ENCODE measurements at regions of chr12 and their contacts with region 1.

Region 1: DNA sequence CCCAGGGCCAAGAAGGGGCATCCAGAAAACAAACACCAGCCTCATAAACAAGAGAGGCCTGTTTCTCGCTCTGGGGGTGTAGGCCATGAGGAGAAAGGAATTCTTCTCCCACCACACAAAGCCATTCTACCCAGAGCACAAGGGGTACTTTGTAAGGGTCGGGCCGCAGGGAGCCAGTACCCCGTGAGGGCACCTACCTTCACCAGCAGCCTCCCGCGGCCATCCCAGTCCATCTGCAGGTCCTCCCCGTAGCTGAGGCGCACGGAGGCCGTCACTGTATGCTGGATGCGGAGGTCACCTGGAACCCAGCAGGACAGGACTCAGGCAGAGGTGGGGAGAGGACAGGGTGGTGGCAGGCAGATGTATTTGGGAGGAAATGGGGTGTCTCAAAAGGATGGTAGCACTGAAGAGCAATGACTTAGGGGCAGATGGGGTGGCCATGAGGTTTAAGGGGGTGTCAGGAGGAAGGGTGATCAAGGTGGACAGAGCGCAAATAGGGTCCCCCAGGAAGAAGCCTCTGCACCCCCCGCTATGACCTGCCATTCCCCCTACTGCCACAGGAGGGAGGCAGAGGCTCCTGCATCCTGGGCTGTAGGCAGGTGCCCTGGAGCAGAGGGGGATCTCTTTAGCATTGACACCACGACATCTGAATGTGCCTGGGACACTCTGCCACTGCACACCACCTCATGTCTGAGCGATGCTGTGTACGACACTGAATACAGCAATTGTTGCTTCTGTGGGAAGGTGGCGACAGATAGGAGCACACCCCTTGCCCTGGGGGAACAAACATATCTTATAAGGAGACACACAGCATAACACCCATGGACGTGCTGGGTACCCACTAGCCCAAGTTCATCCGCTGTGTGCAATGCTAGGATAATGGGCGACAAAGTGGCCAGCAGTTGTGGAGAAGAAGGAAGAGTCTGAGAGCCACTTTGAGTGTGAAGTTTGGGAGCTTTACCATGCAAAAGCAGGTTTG is 61.4 kb downstream of the VWF start:
- DNase-seq: peak; percentile 84
- H3K4me3 ChIP-seq: no peak overlapping the region
- H3K27ac ChIP-seq: peak overlapping the region in 1 of 8 donors; percentile 17
- H3K4me1 ChIP-seq: peaks cover 0 to 15% (median 3%) of the 10 kb centered on the region in 6 donors
- H3K27me3 ChIP-seq: peaks cover 0 to 15% (median 0%) of the 10 kb centered on the region in 7 donors
- CTCF ChIP-seq: peak; percentile 74 to 94 (median 87)
- POLR2A ChIP-seq: no peak

Region 2: DNA sequence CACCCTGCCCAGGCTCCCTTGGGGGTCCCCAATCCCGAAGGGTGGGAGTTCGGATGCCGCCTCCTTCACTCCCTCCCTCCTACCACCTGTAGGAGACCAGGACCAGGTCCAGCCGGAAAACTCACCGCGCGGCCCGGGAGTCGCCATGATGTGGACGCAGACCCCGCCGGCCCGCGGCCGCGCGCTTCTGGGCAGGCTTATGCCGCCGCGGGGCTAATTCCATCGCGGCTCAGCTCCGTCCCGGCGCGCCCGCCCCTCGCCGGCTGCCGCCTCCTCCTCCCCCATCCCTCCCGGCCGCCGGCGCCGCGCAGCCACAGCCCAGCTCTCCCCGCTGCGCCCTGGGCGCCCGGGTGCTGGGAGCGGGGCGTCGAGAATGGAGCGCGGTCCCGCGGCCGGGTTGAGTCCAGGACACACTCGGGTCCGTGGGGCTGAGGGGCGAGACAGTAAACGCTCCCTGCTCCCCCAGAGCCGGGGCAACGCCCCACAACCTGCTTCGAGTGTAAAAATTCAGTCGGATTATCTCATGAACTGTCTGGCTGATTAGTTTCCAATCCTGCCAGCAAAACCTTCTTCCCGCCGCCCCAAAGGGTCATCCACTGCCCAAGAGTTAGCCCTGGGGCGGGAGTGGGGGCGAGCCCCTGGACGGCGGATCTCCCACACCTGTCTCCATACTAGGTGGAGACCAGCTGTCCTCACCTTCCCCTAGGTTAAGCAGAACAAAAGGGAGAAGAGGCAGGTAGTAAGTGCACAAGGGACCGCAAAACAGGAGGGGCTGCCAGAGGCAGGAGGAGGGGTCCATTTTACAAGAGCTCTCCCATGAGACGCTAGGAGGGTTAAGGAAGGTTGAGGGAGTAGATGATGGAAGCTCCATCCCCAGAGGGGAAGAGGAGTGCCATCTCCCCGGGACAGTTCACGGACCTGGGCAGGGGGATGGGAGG is 117.7 kb before region 1 on chr12 and contains the start of gene ANO2:
- intact Hi-C with region 1: no loop called
- DNase-seq: no peak
- H3K4me3 ChIP-seq: peak within 1 kb of the TSS in 4 of 8 donors; percentile 8 to 49 (median 14)
- H3K27ac ChIP-seq: no peak within 1 kb of the TSS
- H3K4me1 ChIP-seq: peaks cover 0 to 13% (median 4%) of the 10 kb centered on the region in 6 donors
- H3K27me3 ChIP-seq: peaks cover 0 to 71% (median 28%) of the 10 kb centered on the region in 7 donors
- CTCF ChIP-seq: no peak
- POLR2A ChIP-seq: no peak
- total RNA-seq, gene ANO2: 10.5 to 35.1 (median 15.7) TPM

Region 3: GRCh38 chr12:6195665-6196535 is 132.9 kb after region 1 on chr12:
- intact Hi-C with region 1: loop called (anchors 10 kb)
- DNase-seq: peak; percentile 88
- H3K4me3 ChIP-seq: no peak overlapping the region
- H3K27ac ChIP-seq: peak overlapping the region in 6 of 8 donors; percentile 13 to 58 (median 37)
- H3K4me1 ChIP-seq: peaks cover 4 to 35% (median 27%) of the 10 kb centered on the region in 6 donors
- H3K27me3 ChIP-seq: peaks cover 0 to 40% (median 7%) of the 10 kb centered on the region in 7 donors
- CTCF ChIP-seq: peak; percentile 84 to 94 (median 92)
- POLR2A ChIP-seq: no peak

Region 4: DNA sequence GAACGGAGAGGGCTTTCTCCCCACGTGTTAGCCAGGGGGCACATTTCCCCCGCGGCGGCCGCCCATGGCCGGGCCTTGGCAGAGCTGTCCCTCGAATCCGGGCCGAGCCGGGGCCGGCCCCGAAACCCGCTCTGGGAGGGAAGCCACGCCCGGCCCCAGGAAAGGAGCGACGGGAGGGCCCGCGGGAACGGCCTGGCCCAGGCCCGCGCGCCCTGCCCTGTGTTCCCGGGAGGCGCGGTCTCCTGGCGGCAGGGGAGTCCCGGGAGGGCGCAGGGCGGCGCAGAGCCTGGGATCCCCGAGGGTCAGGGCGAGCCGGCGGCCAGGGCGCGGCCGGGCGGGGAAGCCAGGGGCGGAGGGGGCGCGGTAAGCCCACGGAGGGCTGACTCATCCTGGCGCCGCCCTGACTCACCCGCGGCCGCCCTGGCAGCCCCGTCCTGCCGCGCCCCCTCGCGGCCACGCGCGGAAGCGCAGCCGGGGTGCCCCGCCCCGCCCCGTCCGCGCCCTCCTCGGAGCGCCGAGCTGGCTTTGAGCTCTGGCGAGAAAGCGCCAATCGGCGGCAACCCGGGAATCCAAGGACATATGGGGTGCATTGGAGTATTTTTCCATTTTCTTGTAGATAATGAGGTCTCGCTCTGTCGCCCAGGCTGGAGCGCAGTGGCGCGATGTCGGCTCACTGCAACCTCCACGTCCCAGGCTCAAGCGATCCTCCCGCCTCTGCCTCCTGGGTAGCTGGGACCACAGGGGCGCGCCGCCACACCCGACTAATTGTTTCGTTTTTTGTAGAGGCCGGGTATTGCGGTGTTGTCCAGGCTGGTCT is 215.6 kb after region 1 on chr12:
- intact Hi-C with region 1: loop called (anchors 5 kb)
- DNase-seq: peak; percentile 96
- H3K4me3 ChIP-seq: peak overlapping the region; percentile 31 to 74 (median 50)
- H3K27ac ChIP-seq: peak overlapping the region in 7 of 8 donors; percentile 54 to 87 (median 80)
- H3K4me1 ChIP-seq: peaks cover 10 to 39% (median 25%) of the 10 kb centered on the region in 6 donors
- H3K27me3 ChIP-seq: peaks cover 0 to 57% (median 0%) of the 10 kb centered on the region in 7 donors
- CTCF ChIP-seq: peak; percentile 48 to 100 (median 97)
- POLR2A ChIP-seq: no peak

Region 5: DNA sequence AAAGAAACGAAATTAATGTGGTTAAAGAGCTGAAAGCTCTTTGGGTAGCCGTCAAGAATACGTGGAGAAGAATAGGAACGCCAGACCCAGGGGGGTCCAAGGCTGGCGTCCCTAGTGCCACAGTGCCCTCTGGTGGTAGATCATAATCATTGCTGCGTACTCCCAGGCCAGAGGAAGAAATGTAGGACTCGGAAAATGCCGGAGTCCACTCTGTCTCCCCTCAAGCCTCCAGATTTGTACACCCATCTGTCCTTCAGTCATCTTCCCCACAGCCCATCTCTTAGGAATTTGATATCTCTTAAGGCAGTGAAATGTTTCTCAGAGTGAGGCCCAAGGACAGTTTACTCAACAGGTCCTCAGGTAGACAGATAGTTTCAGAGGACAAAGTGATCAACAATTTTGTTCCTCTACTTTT is 222.0 kb after region 1 on chr12:
- intact Hi-C with region 1: loop called (anchors 5 kb)
- DNase-seq: peak; percentile 84
- H3K4me3 ChIP-seq: no peak overlapping the region
- H3K27ac ChIP-seq: no peak overlapping the region
- H3K4me1 ChIP-seq: peaks cover 0 to 25% (median 7%) of the 10 kb centered on the region in 6 donors
- H3K27me3 ChIP-seq: peaks cover 0 to 12% (median 0%) of the 10 kb centered on the region in 7 donors
- CTCF ChIP-seq: peak; percentile 81 to 95 (median 91)
- POLR2A ChIP-seq: no peak

Measured in spleen (tissue), 13 donors.